Activated CD4-positive, alpha-beta T cell treated with anti-CD3 and anti-CD28 coated beads for 36 hours (primary cell): ENCODE measurements at regions of chr15 and their contacts with region 1.

Region 1: GRCh38 chr15:98311566-98312188 is 336.7 kb upstream of the IGF1R start:
- DNase-seq: peak; percentile 85
- ATAC-seq: no peak
- H3K4me3 Mint-ChIP-seq: no peak overlapping the region
- H3K27ac Mint-ChIP-seq: no peak overlapping the region
- H3K4me1 Mint-ChIP-seq: peaks cover 4% of the 10 kb centered on the region
- H3K27me3 Mint-ChIP-seq: peaks cover 13% of the 10 kb centered on the region

Region 2: DNA sequence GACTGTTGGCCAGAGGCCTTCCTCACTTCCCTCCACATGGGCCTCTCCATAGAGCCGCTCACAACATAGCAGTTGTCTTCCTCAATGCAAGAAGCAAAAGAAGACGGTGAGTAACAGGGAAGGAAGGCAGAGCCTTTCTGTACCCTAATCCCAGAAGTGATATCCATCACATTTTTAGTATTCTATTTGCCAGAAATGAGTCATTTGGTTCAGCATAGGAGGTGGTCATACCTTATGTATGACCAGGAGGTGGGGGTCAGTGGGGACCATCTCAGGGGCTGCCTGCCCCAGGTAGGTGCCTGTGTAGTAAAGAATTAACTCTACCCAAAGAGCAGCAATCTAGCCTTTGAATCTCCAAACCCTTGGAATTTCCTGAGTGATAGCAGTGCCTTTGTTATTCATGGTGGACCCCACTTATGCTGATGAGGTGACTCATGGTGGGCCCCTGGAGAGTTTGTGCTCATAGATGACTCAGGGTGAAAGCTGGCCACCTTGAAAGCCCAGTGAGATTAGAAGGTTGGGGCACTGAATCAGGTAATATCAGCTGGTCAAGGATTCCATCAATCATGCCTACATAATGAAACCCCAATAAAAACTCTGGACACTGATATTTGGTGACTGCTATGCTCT is 12.8 kb after region 1 on chr15:
- CTCF ChIA-PET with region 1: interaction called, 12 read pairs
- POLR2A ChIA-PET with region 1: no interaction called
- intact Hi-C with region 1: no loop called
- DNase-seq: no peak
- ATAC-seq: no peak
- H3K4me3 Mint-ChIP-seq: no peak overlapping the region
- H3K27ac Mint-ChIP-seq: no peak overlapping the region
- H3K4me1 Mint-ChIP-seq: no peaks in the 10 kb centered on the region
- H3K27me3 Mint-ChIP-seq: peaks cover 2% of the 10 kb centered on the region

Region 3: DNA sequence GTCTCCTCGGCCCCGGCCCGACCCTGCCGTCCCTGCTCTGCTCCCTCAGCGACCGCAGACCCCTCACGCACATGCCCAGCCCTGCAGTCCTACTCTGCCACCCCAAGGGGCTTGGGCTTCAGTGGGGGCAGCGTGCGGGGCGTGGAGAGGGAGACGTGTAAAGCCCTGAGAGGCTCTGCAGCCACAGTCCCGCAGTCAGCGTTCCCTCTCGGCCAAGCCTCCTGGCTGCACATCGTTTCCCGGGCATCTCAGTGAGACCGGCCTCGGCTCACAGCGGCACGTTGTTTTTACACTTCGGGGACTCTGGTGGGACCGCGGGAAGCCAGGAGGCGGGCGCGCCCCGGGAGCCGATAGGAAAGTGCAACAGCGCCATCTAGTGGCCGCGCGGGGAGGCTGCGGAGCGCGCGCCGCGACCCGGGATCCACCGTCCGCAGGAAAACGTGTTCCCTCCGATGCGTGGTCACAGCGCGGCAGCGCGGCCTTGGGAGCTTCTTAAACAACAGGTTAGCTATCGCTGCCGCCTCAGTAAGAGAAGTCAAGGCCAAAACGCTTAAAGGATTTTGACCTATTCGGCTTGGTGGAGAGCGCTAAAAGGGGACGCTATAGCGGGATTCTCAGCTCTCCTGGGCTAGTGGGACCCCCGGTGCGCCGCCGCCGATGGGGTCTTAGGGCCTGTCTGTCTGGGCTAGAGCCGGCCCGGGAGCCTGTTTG is 109.9 kb after region 1 on chr15:
- CTCF ChIA-PET with region 1: interaction called, 67 read pairs
- POLR2A ChIA-PET with region 1: no interaction called
- intact Hi-C with region 1: loop called (anchors 1 kb)
- DNase-seq: peak; percentile 77
- ATAC-seq: peak; percentile 78
- H3K4me3 Mint-ChIP-seq: no peak overlapping the region
- H3K27ac Mint-ChIP-seq: no peak overlapping the region
- H3K4me1 Mint-ChIP-seq: peaks cover 4% of the 10 kb centered on the region
- H3K27me3 Mint-ChIP-seq: peaks cover 38% of the 10 kb centered on the region

Region 4: GRCh38 chr15:98428253-98428989 is 116.7 kb after region 1 on chr15:
- CTCF ChIA-PET with region 1: interaction called, 67 read pairs
- POLR2A ChIA-PET with region 1: no interaction called
- intact Hi-C with region 1: loop called in 1 of 2 experiments (anchors 2 kb)
- DNase-seq: peak; percentile 79
- ATAC-seq: peak; percentile 80
- H3K4me3 Mint-ChIP-seq: peak overlapping the region; percentile 54
- H3K27ac Mint-ChIP-seq: no peak overlapping the region
- H3K4me1 Mint-ChIP-seq: peaks cover 4% of the 10 kb centered on the region
- H3K27me3 Mint-ChIP-seq: peaks cover 42% of the 10 kb centered on the region